ENCODE measurements at regions of chr12 and their contacts with region 1.

Region 1: GRCh38 chr12:48977315-48978281 is 524 bp upstream of the WNT1 start:
- DNase-seq: peak; percentile 87
- H3K4me3 Mint-ChIP-seq: peak overlapping the region; percentile 59
- H3K27ac Mint-ChIP-seq: peak overlapping the region; percentile 70
- H3K4me1 Mint-ChIP-seq: peaks cover 55% of the 10 kb centered on the region
- H3K27me3 Mint-ChIP-seq: peaks cover 63% of the 10 kb centered on the region

Region 2: GRCh38 chr12:47949441-47950308 is 1027.9 kb before region 1 on chr12:
- CTCF ChIA-PET with region 1: no interaction called
- POLR2A ChIA-PET with region 1: no interaction called
- intact Hi-C with region 1: no loop called
- DNase-seq: peak; percentile 72
- H3K4me3 Mint-ChIP-seq: no peak overlapping the region
- H3K27ac Mint-ChIP-seq: no peak overlapping the region
- H3K4me1 Mint-ChIP-seq: peaks cover 5% of the 10 kb centered on the region
- H3K27me3 Mint-ChIP-seq: peaks cover 3% of the 10 kb centered on the region

Region 3: DNA sequence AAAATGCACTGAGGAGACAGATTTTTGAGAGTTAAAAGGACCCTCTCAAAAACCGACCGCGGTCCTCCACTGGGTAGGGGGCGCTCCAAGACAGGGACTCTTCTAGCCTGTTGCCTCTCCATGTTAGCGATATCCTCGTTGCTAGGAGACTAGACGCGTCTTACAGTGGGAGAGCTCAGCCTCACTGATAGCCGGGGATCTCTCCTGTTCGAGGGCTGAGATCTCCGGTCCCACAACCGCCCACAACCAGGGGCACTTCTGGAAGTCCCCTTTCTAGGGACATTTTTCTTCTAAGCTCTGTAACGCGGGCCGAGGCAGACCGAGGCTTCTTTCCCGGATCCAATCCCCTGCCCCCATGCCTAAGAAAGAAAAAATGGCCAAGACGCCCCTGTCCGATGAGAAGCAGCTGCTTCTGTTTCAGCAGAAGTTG is 73.6 kb before region 1 on chr12:
- CTCF ChIA-PET with region 1: interaction called, 16 read pairs
- POLR2A ChIA-PET with region 1: no interaction called
- intact Hi-C with region 1: loop called (anchors 5 kb)
- DNase-seq: peak; percentile 89
- H3K4me3 Mint-ChIP-seq: peak overlapping the region; percentile 70
- H3K27ac Mint-ChIP-seq: no peak overlapping the region
- H3K4me1 Mint-ChIP-seq: peaks cover 2% of the 10 kb centered on the region
- H3K27me3 Mint-ChIP-seq: no peaks in the 10 kb centered on the region

Region 4: DNA sequence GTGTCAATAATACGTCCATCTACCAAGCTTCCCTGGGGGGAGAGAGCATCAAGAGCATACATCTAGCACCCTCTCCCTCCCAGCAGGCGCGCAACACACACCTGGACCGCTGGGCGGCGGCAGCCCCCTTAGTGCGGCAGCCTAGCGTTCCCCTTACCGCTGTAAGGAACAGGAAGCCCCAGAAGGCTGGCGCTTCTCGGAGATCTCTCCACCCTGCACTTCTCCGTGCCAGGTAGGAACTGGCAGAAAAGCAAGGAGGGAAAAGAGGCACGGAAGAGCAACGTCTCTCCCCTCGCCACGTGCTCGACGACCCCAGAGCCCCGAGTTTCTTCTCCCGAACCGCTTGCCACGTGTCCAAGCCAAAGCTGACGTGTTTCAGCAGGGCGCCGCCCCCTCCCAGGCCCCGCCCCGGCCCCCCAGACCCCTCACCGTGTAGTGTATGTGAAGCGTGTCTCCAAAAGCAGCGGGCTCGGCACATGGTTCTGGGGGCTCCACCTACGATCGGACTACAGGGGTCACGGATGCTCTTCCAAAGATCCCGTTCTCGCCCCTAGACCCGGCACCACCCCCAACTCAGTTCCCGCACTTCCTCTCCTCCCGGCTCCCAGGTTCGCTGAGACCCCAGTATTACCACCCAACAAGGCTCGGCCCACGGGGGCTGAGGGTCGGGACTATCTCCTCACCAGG is 52.8 kb before region 1 on chr12:
- CTCF ChIA-PET with region 1: interaction called, 12 read pairs
- POLR2A ChIA-PET with region 1: no interaction called
- intact Hi-C with region 1: loop called (anchors 2 kb)
- DNase-seq: peak; percentile 82
- H3K4me3 Mint-ChIP-seq: peak overlapping the region; percentile 88
- H3K27ac Mint-ChIP-seq: peak overlapping the region; percentile 94
- H3K4me1 Mint-ChIP-seq: peaks cover 47% of the 10 kb centered on the region
- H3K27me3 Mint-ChIP-seq: no peaks in the 10 kb centered on the region

Region 5: GRCh38 chr12:48957141-48958048 is 20.2 kb before region 1 on chr12 and contains the start of gene ARF3:
- CTCF ChIA-PET with region 1: interaction called, 202 read pairs
- POLR2A ChIA-PET with region 1: interaction called, 4 read pairs
- intact Hi-C with region 1: loop called (anchors 1 kb)
- DNase-seq: peak; percentile 95
- H3K4me3 Mint-ChIP-seq: peak within 1 kb of the TSS; percentile 86
- H3K27ac Mint-ChIP-seq: peak within 1 kb of the TSS; percentile 83
- H3K4me1 Mint-ChIP-seq: peaks cover 28% of the 10 kb centered on the region
- H3K27me3 Mint-ChIP-seq: no peaks in the 10 kb centered on the region
- total RNA-seq, gene ARF3: 110 to 121 TPM

Region 6: DNA sequence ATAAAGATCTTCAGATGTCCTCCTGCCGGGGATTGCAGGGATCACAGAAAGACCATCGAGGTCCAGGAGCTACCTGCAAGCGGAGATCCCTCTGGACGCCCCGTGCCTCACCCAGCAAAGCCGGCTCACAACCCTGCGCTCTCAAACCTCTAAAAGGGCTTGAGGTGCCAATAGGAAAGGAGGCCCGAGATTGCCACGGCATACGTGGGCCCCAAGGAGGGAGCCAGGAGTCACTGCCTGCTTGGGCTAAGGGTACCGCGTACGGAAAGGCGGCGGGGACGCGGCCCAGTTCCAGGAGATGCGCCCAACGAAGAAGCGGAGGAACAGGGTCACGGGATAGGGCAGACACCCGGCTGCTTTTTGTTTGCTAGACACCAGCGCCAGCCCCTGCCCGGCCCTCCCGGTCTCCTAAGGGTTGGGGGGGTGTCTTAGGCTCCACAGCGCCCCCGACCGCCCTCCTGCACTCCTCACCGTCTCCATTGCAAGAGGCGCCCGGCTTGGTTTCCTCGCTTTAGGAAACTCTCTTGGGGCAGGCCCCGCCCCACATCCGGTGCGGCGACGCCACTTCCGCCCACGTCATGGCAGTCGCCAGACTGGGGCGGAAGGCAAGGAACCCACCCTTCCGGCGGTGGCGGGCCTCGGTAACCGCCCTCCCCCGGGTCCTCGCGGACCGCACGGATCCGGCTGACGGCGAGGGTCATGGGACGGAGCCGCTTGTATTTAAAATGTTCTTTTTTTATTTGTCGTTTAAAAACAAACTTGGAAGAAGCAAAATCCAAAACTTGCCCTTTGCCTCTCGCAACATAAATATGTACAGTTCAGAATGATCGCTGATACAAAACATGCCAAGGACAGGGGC is 40.9 kb after region 1 on chr12 and contains the start of gene PRKAG1:
- CTCF ChIA-PET with region 1: interaction called, 7 read pairs
- POLR2A ChIA-PET with region 1: no interaction called
- intact Hi-C with region 1: loop called (anchors 1 kb)
- DNase-seq: peak; percentile 97
- H3K4me3 Mint-ChIP-seq: peak within 1 kb of the TSS; percentile 95
- H3K27ac Mint-ChIP-seq: peak within 1 kb of the TSS; percentile 92
- H3K4me1 Mint-ChIP-seq: peaks cover 40% of the 10 kb centered on the region
- H3K27me3 Mint-ChIP-seq: no peaks in the 10 kb centered on the region
- total RNA-seq, gene PRKAG1: 52.0 to 55.8 TPM

Region 7: DNA sequence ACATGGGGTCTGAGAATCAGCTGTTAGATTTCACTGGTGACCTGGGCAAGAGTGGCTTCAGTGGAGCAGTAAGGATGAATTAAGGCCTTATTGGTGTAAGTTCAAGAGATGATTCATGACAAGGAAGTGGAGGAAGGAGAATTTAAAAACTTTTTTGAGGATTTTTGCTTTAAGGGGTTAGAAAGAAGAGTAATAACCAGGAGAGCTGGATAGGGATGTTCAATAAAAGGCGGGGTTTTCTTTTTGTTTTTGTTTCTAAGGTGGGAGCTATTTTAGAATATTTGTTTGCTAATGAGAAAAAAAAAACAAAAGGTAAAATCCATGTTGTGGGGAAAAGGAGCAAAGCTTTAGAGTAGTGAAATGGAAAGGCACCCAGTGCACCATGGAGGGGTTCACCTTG is 168.8 kb after region 1 on chr12:
- CTCF ChIA-PET with region 1: no interaction called
- POLR2A ChIA-PET with region 1: no interaction called
- intact Hi-C with region 1: no loop called
- DNase-seq: no peak
- H3K4me3 Mint-ChIP-seq: no peak overlapping the region
- H3K27ac Mint-ChIP-seq: no peak overlapping the region
- H3K4me1 Mint-ChIP-seq: no peaks in the 10 kb centered on the region
- H3K27me3 Mint-ChIP-seq: no peaks in the 10 kb centered on the region

Region 8: DNA sequence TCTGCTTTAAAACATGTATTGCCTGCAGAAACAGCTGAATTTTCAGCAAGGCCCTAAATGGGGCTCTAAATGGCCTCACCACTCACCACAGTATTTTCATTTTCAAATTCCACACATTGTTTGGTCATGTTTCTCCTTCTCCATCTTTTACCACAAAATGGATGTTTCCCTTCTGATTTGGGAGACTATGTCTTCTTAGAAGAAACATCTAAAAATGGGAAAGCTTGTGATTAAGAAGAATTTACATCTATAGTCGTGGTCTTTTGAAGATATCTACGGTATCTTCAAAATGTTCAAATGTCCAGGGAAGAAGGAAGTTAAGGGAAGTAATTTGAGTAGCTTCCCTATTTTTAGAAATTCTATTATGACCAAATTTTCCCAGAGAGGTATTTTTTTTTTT is 266.6 kb after region 1 on chr12:
- CTCF ChIA-PET with region 1: no interaction called
- POLR2A ChIA-PET with region 1: no interaction called
- intact Hi-C with region 1: no loop called
- DNase-seq: no peak
- H3K4me3 Mint-ChIP-seq: no peak overlapping the region
- H3K27ac Mint-ChIP-seq: no peak overlapping the region
- H3K4me1 Mint-ChIP-seq: no peaks in the 10 kb centered on the region
- H3K27me3 Mint-ChIP-seq: no peaks in the 10 kb centered on the region

Region 9: DNA sequence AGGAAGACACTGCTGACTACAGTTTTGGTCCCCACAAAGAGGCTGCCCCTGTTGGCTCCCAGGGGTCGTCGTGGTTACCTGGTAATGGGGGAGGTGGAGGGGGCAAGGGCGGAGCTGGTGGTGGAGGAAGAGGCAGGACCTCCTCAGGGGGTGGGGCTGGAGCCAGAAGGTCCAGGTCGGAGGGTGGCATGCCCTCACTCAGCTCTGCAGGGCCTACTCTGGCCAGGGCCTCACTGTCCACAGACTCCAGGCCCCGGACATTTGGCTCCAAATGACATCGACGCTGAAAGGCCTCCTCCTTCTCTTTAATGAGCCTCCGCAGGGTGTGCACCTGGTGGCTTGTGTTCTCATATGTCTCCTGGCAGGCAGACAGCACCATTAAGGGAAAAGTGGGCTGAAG is 674.3 kb after region 1 on chr12:
- CTCF ChIA-PET with region 1: no interaction called
- POLR2A ChIA-PET with region 1: no interaction called
- intact Hi-C with region 1: no loop called
- DNase-seq: no peak
- H3K4me3 Mint-ChIP-seq: no peak overlapping the region
- H3K27ac Mint-ChIP-seq: no peak overlapping the region
- H3K4me1 Mint-ChIP-seq: peaks cover 18% of the 10 kb centered on the region
- H3K27me3 Mint-ChIP-seq: no peaks in the 10 kb centered on the region